ENCODE measurements at regions of chr1 and their contacts with region 1.

Region 1: GRCh38 chr1:10829965-10830515 is 33.6 kb upstream of the CASZ1 start:
- DNase-seq: no peak
- H3K4me3 ChIP-seq: no peak overlapping the region
- H3K27ac ChIP-seq: no peak overlapping the region
- H3K27me3 ChIP-seq: peaks cover 28% of the 10 kb centered on the region
- CTCF ChIP-seq: no peak

Region 2: DNA sequence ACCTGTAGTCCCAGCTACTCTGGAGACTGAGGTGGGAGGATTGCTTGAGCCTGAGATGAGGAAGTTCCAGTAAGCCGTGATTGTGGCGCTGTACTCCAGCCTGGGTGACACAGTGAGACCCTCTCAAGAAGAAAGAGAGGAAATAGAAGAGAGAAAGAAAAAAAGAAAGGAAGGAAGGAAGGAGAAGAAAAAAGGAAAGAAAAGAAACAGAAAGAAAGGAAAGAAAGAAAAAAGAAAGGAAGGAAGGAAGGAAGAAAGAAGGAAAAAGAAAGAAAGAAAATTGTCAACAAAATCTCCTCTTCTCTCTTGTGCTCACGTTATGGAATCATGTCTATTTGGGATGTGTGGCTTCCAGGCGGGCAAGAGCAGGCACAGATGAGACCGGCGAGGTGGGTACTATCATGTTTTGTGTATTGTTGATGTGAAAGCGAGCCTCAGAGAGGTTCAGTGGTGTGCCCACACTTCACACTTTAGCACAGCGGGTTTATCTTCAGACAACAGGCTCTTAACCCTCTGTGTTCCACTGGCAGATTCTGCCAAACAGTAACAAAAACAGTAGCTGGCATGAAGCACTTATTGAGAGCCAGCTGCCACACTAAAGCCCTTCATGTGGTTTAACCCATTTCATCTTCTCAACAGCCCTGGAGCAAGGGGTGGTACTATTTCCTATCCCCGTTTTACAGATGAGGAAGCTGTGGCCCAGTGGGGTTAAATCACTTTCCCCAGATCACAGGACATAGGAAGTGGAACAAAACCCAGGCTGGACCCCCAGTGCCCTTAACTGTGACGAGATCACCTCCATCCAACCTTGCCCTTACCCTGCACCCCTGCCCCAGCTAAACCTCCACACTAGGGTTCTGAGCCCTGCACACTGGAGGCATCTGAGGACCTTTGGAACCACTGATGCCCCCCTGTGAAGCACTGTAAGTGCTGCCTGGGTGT is 87.7 kb after region 1 on chr1:
- CTCF ChIA-PET with region 1: interaction called, 10 read pairs
- POLR2A ChIA-PET with region 1: no interaction called
- DNase-seq: no peak
- H3K4me3 ChIP-seq: no peak overlapping the region
- H3K27ac ChIP-seq: no peak overlapping the region
- H3K27me3 ChIP-seq: peaks cover 24% of the 10 kb centered on the region
- CTCF ChIP-seq: no peak

Measured in AG04450 (cell line).